ENCODE measurements at regions of chr10 and their contacts with region 1.

Region 1: GRCh38 chr10:105063796-105064195 is 422.7 kb downstream of the SORCS3 start:
- DNase-seq: peak in 2 of 5 donors; percentile 23 to 26
- ATAC-seq: peak in 2 of 4 donors; percentile 41 to 70
- H3K4me3 ChIP-seq: no peak overlapping the region
- H3K27ac ChIP-seq: no peak overlapping the region
- H3K4me1 ChIP-seq: no peaks in the 10 kb centered on the region
- H3K27me3 ChIP-seq: peaks cover 0 to 3% (median 0%) of the 10 kb centered on the region in 9 donors
- CTCF ChIP-seq: peak in 10 of 12 donors; percentile 14 to 45 (median 41)
- POLR2A ChIP-seq: no peak

Region 2: GRCh38 chr10:105691811-105692210 is 628.0 kb after region 1 on chr10:
- intact Hi-C with region 1: loop called in 1 of 10 experiments (anchors 5 kb)
- DNase-seq: no peak
- ATAC-seq: no peak
- H3K4me3 ChIP-seq: no peak overlapping the region
- H3K27ac ChIP-seq: no peak overlapping the region
- H3K4me1 ChIP-seq: no peaks in the 10 kb centered on the region
- H3K27me3 ChIP-seq: no peaks in the 10 kb centered on the region
- CTCF ChIP-seq: peak in 5 of 12 donors; percentile 8 to 21 (median 15)
- POLR2A ChIP-seq: no peak

Region 3: DNA sequence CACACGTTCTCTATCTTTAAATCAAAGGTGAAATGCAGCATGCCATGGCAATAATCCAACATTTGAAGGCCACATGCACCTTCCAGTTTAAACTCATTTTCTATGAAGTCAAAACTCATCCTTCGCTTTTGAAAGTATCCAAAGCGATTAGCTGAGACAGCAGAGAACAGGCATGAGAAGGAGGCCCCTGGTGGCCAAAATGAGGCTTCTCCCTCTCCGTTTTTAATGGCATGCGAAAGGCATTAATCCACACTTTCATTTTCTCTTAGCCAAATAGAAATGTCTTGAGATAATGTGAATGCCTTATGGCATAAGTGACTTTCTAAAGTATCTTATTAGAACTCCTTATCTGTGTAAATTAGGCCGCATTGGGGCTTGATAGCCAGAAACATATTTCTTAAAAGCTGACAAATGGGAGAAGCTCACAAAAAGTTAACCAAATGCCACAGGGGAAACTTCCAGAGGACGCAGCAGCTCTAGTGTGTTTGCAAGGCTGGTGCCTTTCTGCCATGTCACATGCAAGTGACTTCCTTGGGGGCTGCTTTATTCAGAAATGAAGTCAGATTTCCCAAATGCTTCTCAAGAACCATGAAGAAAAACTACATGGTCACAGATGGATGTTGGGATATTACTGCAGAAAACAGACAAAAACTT is 911.1 kb after region 1 on chr10:
- intact Hi-C with region 1: loop called in 1 of 10 experiments (anchors 10 kb)
- DNase-seq: peak in 1 of 5 donors; percentile 29
- ATAC-seq: peak in 3 of 4 donors; percentile 55 to 79 (median 62)
- H3K4me3 ChIP-seq: peak overlapping the region in 9 of 12 donors; percentile 26 to 53 (median 37)
- H3K27ac ChIP-seq: peak overlapping the region in 2 of 12 donors; percentile 28 to 53
- H3K4me1 ChIP-seq: peaks cover 0 to 11% (median 0%) of the 10 kb centered on the region in 12 donors
- H3K27me3 ChIP-seq: no peaks in the 10 kb centered on the region
- CTCF ChIP-seq: peak; percentile 44 to 69 (median 53)
- POLR2A ChIP-seq: no peak

Region 4: GRCh38 chr10:106175760-106176377 is 1112.1 kb after region 1 on chr10:
- intact Hi-C with region 1: loop called in 2 of 10 experiments (anchors 5 to 10 kb)
- DNase-seq: no peak
- ATAC-seq: no peak
- H3K4me3 ChIP-seq: no peak overlapping the region
- H3K27ac ChIP-seq: no peak overlapping the region
- H3K4me1 ChIP-seq: no peaks in the 10 kb centered on the region
- H3K27me3 ChIP-seq: no peaks in the 10 kb centered on the region
- CTCF ChIP-seq: peak in 11 of 12 donors; percentile 16 to 59 (median 35)
- POLR2A ChIP-seq: no peak

Measured in heart left ventricle (tissue), 16 donors.